CD8-positive, alpha-beta T cell (primary cell): ENCODE measurements at regions of chr1 and their contacts with region 1.

Region 1: DNA sequence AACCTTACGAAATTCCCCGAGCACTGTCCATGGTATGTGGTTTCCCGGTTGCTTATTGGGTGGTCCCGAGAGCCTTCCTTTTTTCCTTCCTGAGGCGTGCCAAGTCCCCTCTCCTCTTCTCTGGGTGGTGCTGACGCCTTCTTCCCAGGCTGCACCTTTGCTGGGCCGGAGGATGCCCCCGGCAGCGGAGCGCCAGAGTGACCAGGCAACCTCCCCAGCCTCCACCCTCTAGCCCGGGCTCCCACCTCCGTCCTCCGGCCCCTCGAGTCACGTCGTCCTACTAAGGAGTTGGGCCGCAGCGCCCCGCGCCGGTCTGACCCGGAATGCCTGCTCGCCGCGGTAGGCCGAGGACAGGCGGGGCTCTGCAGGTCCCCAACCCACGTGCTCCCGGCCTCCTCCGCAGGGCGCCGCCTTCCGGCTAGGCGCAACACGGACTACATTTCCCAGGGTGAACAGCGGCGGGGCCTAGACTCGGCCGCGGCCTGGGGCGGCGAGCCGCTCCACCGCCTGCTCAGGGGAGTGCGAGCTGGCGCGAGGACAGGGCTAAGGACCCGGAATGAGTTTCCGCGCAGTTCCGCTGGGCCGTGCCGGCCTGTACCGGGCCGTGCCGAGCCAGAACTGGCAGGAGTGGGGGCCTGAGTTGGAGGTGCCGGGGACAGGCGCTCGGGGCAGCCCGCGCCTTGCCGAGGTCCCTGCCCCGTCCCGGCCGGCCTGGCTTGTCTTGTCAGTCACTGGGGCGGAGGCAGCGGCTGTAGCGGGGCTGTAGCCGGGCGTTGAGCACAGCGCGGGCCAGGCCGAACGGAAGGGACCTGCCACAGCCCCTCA is at the start of gene IPO13:
- DNase-seq: peak; percentile 89 to 97 (median 94)
- ATAC-seq: peak; percentile 95
- H3K4me3 ChIP-seq: peak within 1 kb of the TSS; percentile 90 to 98
- H3K4me3 Mint-ChIP-seq: peak within 1 kb of the TSS; percentile 88
- H3K27ac ChIP-seq: peak within 1 kb of the TSS; percentile 92 to 99
- H3K27ac Mint-ChIP-seq: peak within 1 kb of the TSS; percentile 96
- H3K4me1 ChIP-seq: peaks cover 22% of the 10 kb centered on the region
- H3K4me1 Mint-ChIP-seq: peaks cover 63% of the 10 kb centered on the region
- H3K27me3 ChIP-seq: no peaks in the 10 kb centered on the region
- H3K27me3 Mint-ChIP-seq: no peaks in the 10 kb centered on the region
- CTCF ChIP-seq: peak; percentile 54
- total RNA-seq, gene IPO13: 6.5 to 8.1 TPM

Region 2: DNA sequence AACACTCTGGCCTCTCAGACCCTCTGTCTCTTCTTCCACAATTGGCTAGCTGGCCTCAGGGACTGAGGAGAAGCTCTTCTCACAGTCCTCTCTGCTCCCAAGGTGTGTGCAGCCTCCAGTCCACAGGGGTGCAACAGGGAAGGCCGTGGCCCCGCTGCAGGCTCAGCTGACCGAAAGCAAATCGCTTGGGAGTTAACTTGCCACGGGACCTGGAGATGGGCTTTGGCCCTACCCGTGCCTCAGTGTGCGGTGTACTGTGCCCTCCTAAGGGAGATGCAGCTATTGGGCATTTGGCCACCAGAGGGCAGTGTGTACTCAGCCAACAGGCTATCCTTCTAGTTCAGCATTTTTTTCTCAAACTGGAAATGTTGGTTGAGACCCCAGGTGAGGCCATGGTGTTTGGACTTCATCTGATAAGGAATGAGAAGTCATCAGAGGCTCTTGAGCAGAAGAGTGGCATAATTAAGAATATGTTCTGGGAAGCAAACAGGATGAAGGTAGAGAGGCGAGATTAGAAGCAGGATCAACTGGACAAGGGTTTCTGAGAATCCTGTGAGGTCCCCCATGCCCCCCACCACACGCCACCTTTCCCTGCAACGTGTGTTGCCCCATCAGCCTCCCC is 719.2 kb before region 1 on chr1:
- CTCF ChIA-PET with region 1: no interaction called
- POLR2A ChIA-PET with region 1: no interaction called
- intact Hi-C with region 1: loop called in 1 of 2 experiments (anchors 10 kb)
- DNase-seq: peak; percentile 70 to 91 (median 82)
- ATAC-seq: peak; percentile 91
- H3K4me3 ChIP-seq: no peak overlapping the region
- H3K4me3 Mint-ChIP-seq: no peak overlapping the region
- H3K27ac ChIP-seq: no peak overlapping the region
- H3K27ac Mint-ChIP-seq: no peak overlapping the region
- H3K4me1 ChIP-seq: no peaks in the 10 kb centered on the region
- H3K4me1 Mint-ChIP-seq: no peaks in the 10 kb centered on the region
- H3K27me3 ChIP-seq: no peaks in the 10 kb centered on the region
- H3K27me3 Mint-ChIP-seq: peaks cover 3% of the 10 kb centered on the region
- CTCF ChIP-seq: peak; percentile 83

Region 3: DNA sequence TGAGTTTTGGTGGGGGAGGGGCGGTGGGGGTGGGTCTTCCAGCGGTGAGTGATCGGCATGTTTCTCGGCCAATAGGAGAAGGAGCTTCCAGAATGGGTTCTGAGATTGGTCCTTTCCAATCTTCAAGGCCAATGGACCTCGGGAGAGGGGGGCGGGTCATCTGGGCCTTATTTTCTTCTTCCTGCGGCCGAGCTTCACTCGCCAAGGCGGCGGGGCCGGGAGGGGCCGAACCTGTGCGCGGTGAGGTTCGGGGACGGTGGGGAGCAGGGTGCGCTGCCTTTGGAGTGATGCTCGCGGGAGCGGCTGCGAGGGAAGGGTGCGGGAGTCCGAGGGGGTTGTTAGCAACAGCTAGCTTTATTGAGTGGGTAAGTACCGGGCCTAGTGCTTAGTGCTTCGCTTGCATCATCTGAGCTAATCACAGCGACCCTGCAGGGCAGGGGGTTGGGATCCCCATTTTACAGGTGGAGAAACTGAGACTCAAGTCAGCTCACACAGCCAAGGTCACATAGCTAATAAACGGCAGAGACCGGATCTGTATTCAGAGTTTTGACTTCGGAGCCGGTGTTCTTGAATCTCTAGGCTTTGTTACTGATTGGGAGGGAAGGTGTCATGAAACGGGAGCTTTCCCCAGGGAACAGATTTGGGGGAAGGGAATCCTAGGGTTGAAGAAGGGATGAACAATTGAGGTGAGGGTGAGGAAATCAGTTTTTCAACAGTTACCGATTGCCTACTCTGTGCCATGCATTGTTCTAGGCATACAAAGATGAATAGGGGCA is 295.9 kb before region 1 on chr1:
- CTCF ChIA-PET with region 1: no interaction called
- POLR2A ChIA-PET with region 1: interaction called, 5 read pairs
- intact Hi-C with region 1: loop called (anchors 1 kb)
- DNase-seq: peak in 8 of 9 experiments; percentile 74 to 97 (median 89)
- ATAC-seq: peak; percentile 71
- H3K4me3 ChIP-seq: peak overlapping the region; percentile 87 to 92
- H3K4me3 Mint-ChIP-seq: peak overlapping the region; percentile 100
- H3K27ac ChIP-seq: peak overlapping the region; percentile 49 to 86
- H3K27ac Mint-ChIP-seq: peak overlapping the region; percentile 97
- H3K4me1 ChIP-seq: peaks cover 17% of the 10 kb centered on the region
- H3K4me1 Mint-ChIP-seq: peaks cover 41% of the 10 kb centered on the region
- H3K27me3 ChIP-seq: no peaks in the 10 kb centered on the region
- H3K27me3 Mint-ChIP-seq: no peaks in the 10 kb centered on the region
- CTCF ChIP-seq: no peak

Region 4: DNA sequence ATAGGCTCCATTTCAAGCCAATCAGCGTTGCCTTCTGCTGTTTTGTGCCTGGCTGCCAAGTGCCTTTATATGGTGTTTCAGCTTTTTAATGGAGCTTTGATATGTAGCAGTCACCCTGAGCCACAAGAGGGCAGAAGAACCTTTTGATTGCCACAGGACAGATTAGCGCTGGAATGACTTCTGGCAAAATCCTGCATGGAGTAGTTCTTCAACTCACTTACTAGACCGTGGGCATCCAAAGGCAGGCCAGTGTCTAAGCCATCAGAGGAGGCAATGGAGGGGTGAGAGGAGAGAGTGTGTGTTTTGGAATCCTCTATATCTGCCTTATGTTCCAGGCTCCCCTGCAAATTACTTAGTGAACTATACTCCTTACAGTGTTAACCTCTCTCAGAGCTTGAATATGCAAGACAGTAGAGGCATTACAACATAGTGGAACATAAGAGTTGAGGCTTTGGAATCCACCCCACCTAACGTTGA is 182.9 kb before region 1 on chr1:
- CTCF ChIA-PET with region 1: interaction called, 4 read pairs
- POLR2A ChIA-PET with region 1: interaction called, 5 read pairs
- intact Hi-C with region 1: loop called in 1 of 2 experiments (anchors 1 kb)
- DNase-seq: peak in 8 of 9 experiments; percentile 3 to 72 (median 41)
- ATAC-seq: peak; percentile 81
- H3K4me3 ChIP-seq: no peak overlapping the region
- H3K4me3 Mint-ChIP-seq: no peak overlapping the region
- H3K27ac ChIP-seq: no peak overlapping the region
- H3K27ac Mint-ChIP-seq: no peak overlapping the region
- H3K4me1 ChIP-seq: no peaks in the 10 kb centered on the region
- H3K4me1 Mint-ChIP-seq: peaks cover 4% of the 10 kb centered on the region
- H3K27me3 ChIP-seq: no peaks in the 10 kb centered on the region
- H3K27me3 Mint-ChIP-seq: no peaks in the 10 kb centered on the region
- CTCF ChIP-seq: peak; percentile 75

Region 5: GRCh38 chr1:43974443-43975248 is 28.2 kb after region 1 on chr1 and contains the start of gene ATP6V0B:
- CTCF ChIA-PET with region 1: interaction called, 5 read pairs
- POLR2A ChIA-PET with region 1: interaction called, 16 read pairs
- intact Hi-C with region 1: loop called (anchors 1 kb)
- DNase-seq: peak; percentile 83 to 96 (median 93)
- ATAC-seq: peak; percentile 69
- H3K4me3 ChIP-seq: peak within 1 kb of the TSS; percentile 95 to 97
- H3K4me3 Mint-ChIP-seq: peak within 1 kb of the TSS; percentile 92
- H3K27ac ChIP-seq: peak within 1 kb of the TSS; percentile 69 to 88
- H3K27ac Mint-ChIP-seq: peak within 1 kb of the TSS; percentile 95
- H3K4me1 ChIP-seq: peaks cover 37% of the 10 kb centered on the region
- H3K4me1 Mint-ChIP-seq: peaks cover 60% of the 10 kb centered on the region
- H3K27me3 ChIP-seq: no peaks in the 10 kb centered on the region
- H3K27me3 Mint-ChIP-seq: peaks cover 2% of the 10 kb centered on the region
- CTCF ChIP-seq: no peak
- total RNA-seq, gene ATP6V0B: 52.0 to 56.3 TPM

Region 6: DNA sequence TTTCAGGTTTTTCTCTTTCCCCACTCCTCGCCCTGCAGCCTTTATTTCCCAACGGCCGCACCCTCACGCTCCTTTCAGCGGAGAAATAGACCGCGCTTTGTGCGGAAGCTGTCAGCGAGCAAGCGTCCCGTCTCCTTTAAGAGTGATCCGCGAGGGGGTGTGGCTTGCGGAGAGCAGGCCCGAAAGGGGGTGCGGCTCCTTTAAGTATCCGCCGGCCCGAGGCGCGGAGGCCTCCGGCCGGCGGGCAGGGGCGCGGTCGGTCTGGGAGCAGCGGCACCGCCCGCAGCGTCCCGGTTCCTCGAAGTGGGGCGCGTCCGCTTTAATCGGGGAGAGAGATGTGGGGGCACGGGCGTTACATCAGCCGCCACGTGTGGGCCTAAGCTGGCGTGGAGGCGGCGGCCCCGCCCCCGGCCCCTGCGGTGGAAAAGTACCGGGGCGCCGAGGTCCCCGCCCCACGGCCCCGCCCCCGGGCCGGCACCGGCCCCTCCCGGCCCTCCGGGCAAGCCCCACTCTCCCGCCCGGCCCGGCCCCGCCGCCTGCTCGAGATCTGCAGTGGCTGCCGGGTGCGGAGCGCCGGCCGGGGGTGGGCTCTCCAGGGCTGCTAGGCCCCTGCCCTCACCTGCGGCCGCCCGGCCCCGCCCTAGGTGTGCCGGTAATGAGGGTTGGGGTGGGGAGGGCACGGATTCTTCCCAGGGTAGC is 83.6 kb after region 1 on chr1:
- CTCF ChIA-PET with region 1: no interaction called
- POLR2A ChIA-PET with region 1: no interaction called
- intact Hi-C with region 1: loop called (anchors 1 kb)
- DNase-seq: peak; percentile 57 to 90 (median 85)
- ATAC-seq: peak; percentile 78
- H3K4me3 ChIP-seq: peak overlapping the region; percentile 64 to 76
- H3K4me3 Mint-ChIP-seq: peak overlapping the region; percentile 97
- H3K27ac ChIP-seq: peak overlapping the region; percentile 51 to 60
- H3K27ac Mint-ChIP-seq: peak overlapping the region; percentile 95
- H3K4me1 ChIP-seq: peaks cover 12% of the 10 kb centered on the region
- H3K4me1 Mint-ChIP-seq: peaks cover 20% of the 10 kb centered on the region
- H3K27me3 ChIP-seq: no peaks in the 10 kb centered on the region
- H3K27me3 Mint-ChIP-seq: no peaks in the 10 kb centered on the region
- CTCF ChIP-seq: no peak

Region 7: DNA sequence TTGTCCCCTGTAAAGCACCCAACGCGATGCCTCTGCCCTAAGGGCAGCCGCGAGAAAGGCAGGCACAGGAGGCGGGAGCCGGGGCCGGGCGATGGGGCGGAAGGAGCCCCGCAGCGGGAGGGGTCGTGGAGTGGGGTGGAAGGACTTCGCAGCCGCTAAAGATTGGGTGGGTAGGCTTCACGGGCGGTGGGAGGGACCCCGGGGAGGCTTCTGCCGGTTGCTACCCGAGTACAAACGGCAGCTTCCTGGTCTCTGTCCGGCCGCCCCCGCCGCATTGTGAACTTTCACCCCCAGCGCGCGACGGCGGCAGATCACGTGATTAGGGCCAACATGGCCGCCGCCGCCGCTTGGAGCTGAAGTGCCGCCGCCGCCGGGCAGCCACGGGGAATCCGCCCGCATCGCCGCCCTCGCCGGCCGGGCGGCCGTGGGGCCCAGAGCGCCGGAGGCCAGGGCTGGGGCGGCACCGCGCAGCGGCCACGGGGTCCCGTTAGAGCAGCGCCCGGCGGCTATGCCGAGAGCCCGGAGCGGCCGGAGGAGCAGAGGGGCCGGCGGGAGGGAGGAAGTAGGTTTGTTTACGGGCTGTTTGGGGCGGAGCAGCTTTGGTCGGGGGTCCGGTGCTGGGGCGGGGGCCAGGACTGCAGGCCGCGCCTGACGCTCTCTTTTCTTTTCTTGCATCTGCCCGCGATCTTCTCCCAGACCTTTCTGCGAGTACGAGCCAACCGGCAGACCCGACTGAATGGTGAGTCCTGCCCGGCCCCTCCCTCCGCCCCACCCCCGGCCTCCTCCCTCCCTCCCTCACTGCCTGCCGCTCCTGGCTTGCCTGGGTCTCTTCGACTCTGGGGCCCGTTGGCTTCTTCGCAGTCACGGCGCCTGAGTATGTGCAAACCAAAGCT is 685.4 kb after region 1 on chr1:
- CTCF ChIA-PET with region 1: no interaction called
- POLR2A ChIA-PET with region 1: no interaction called
- intact Hi-C with region 1: loop called in 1 of 2 experiments (anchors 5 kb)
- DNase-seq: peak; percentile 73 to 95 (median 88)
- ATAC-seq: peak; percentile 75
- H3K4me3 ChIP-seq: peak overlapping the region; percentile 55 to 82
- H3K4me3 Mint-ChIP-seq: peak overlapping the region; percentile 90
- H3K27ac ChIP-seq: peak overlapping the region; percentile 86 to 97
- H3K27ac Mint-ChIP-seq: peak overlapping the region; percentile 98
- H3K4me1 ChIP-seq: peaks cover 20% of the 10 kb centered on the region
- H3K4me1 Mint-ChIP-seq: peaks cover 48% of the 10 kb centered on the region
- H3K27me3 ChIP-seq: no peaks in the 10 kb centered on the region
- H3K27me3 Mint-ChIP-seq: no peaks in the 10 kb centered on the region
- CTCF ChIP-seq: no peak